Esophagus muscularis mucosa (tissue), 4 donors: ENCODE measurements at regions of chr1 and their contacts with region 1.

Region 1: DNA sequence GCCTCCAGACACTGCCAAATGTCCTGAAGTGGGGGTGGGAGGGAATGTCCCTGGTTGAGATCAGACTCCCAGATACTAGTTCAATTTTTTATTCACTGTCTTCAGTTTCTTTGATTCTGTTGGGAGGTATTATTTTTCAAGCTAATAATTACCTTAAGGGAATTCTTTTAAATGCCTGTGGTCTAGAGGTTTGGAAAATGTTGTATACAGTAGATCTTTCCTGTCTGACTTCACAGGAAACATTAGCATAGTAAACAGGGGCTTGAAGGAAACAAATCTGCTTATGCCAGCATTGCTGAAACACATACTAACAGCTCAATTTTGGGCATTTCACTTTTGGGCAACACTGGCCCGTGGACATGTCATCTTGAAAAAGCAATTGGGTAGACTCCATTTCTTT is 84.3 kb upstream of the HP1BP3 start:
- DNase-seq: no peak
- H3K4me3 ChIP-seq: no peak overlapping the region
- H3K27ac ChIP-seq: no peak overlapping the region
- H3K4me1 ChIP-seq: peaks cover 0 to 19% (median 12%) of the 10 kb centered on the region in 4 donors
- H3K27me3 ChIP-seq: no peaks in the 10 kb centered on the region
- CTCF ChIP-seq: no peak
- EP300 ChIP-seq: no peak
- POLR2A ChIP-seq: no peak

Region 2: DNA sequence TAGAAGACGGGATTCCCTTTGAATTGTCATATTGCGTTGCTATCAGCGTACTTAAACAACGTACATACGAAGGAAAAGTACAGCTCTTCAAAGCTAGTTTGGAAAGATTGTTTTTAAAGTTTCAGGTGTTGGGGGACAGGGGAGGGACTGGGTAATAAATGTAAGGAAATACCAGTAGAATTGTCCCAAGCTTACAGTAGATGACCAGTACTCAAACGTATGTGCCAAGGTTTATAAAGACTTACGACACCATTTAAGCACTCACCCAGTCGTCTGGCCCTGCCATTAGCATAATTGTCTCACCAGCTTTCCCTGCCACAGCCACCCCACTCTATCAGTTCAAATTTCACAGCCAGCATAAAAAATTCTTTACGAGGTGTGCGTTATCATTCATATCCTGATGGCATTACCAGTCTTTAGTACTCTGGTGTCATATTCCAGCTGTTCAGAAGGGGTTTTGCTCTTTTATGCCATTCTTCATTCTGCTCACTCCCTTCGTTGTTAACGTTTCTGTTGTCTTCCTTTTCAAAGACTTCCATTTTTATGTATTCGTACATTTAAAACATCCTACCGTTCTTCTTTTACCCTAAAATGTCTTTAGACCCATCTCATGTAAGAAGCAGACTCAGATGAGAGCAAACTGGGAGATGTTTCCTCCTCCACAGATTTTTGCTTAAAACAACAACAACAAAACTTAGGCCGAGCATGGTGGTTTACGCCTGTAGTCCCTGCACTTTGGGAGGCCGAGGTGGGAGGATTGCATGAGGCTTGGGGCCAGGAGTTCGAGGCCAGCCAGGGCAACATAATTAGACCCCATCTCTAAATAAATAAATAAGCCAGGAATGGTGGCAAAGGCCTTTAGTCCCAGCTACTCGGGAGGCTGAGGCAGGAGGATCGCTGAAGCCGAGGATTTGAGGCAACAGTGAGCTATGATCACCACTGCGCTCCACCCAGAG is 83.3 kb before region 1 on chr1:
- intact Hi-C with region 1: no loop called
- DNase-seq: peak; percentile 86
- H3K4me3 ChIP-seq: peak overlapping the region; percentile 72 to 99 (median 92)
- H3K27ac ChIP-seq: peak overlapping the region; percentile 98 to 99 (median 99)
- H3K4me1 ChIP-seq: peaks cover 21 to 34% (median 32%) of the 10 kb centered on the region in 4 donors
- H3K27me3 ChIP-seq: no peaks in the 10 kb centered on the region
- CTCF ChIP-seq: no peak
- EP300 ChIP-seq: no peak
- POLR2A ChIP-seq: no peak

Region 3: GRCh38 chr1:21189906-21190500 is 318.6 kb after region 1 on chr1:
- intact Hi-C with region 1: loop called (anchors 10 kb)
- DNase-seq: no peak
- H3K4me3 ChIP-seq: no peak overlapping the region
- H3K27ac ChIP-seq: no peak overlapping the region
- H3K4me1 ChIP-seq: peaks cover 1 to 3% (median 2%) of the 10 kb centered on the region in 4 donors
- H3K27me3 ChIP-seq: no peaks in the 10 kb centered on the region
- CTCF ChIP-seq: no peak
- EP300 ChIP-seq: no peak
- POLR2A ChIP-seq: no peak